ENCODE measurements at regions of chr7 and their contacts with region 1.

Region 1: DNA sequence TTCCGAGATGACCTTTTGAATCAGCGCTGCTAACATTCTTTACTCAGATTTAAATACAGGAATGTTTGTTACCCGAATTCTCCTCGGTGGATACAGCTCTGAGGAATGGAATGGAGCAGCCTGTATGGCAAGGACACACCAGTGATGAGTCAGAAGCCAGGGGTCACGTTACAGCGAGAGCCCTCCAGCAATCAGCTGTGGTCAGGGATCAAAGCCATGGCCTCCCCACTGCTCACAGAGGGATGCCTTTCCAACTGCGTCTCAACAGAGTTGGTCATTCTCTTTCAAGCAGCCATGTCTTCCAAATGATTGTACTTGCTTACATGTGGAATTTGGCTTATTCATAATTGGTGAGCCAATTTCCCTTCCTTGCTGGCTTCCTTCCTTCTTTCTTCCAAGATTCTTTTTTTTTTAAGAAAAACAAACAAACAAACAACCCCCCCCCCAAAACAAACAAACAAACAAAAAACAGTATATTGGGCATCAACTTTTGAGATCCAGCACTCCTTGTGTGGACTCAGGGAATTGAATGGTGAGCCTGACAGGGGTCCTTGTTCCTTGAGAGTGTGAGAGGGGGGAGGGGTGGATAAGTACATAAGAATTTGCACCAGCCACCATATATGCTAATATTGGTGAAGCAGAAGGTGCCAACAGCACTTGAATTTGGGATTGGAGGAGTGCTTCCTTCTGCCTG is 100.2 kb downstream of the ATXN7L1 start:
- DNase-seq: peak; percentile 96 to 99
- H3K4me3 ChIP-seq: no peak overlapping the region
- H3K27ac ChIP-seq: peak overlapping the region; percentile 87
- H3K4me1 ChIP-seq: peaks cover 33% of the 10 kb centered on the region
- H3K27me3 ChIP-seq: no peaks in the 10 kb centered on the region
- CTCF ChIP-seq: no peak

Region 2: GRCh38 chr7:105635197-105635596 is 141.0 kb before region 1 on chr7:
- CTCF ChIA-PET with region 1: no interaction called
- POLR2A ChIA-PET with region 1: no interaction called
- intact Hi-C with region 1: no loop called
- DNase-seq: no peak
- H3K4me3 ChIP-seq: no peak overlapping the region
- H3K27ac ChIP-seq: no peak overlapping the region
- H3K4me1 ChIP-seq: no peaks in the 10 kb centered on the region
- H3K27me3 ChIP-seq: no peaks in the 10 kb centered on the region
- CTCF ChIP-seq: no peak

Region 3: GRCh38 chr7:105790996-105791395 is 14.8 kb after region 1 on chr7:
- CTCF ChIA-PET with region 1: no interaction called
- POLR2A ChIA-PET with region 1: no interaction called
- intact Hi-C with region 1: loop called (anchors 2 kb)
- DNase-seq: peak; percentile 83 to 85
- H3K4me3 ChIP-seq: no peak overlapping the region
- H3K27ac ChIP-seq: no peak overlapping the region
- H3K4me1 ChIP-seq: peaks cover 66% of the 10 kb centered on the region
- H3K27me3 ChIP-seq: no peaks in the 10 kb centered on the region
- CTCF ChIP-seq: no peak

Measured in PC-9 (cell line).